Activated naive CD4-positive, alpha-beta T cell treated with anti-CD3 and anti-CD28 coated beads, Interleukin-2, amount 10 ng/mL, durations not matched to agents 7 days and 5 days (primary cell): ENCODE measurements at regions of chr21 and their contacts with region 1.

Region 1: GRCh38 chr21:42107881-42108553 is 36.9 kb downstream of the UMODL1 start:
- DNase-seq: peak; percentile 78
- H3K4me3 Mint-ChIP-seq: peak overlapping the region; percentile 33
- H3K27ac Mint-ChIP-seq: peak overlapping the region; percentile 80
- H3K4me1 Mint-ChIP-seq: peaks cover 14% of the 10 kb centered on the region
- H3K27me3 Mint-ChIP-seq: peaks cover 38% of the 10 kb centered on the region

Region 2: GRCh38 chr21:41612674-41613532 is 495.1 kb before region 1 on chr21:
- CTCF ChIA-PET with region 1: interaction called, 13 read pairs
- DNase-seq: peak; percentile 44
- H3K4me3 Mint-ChIP-seq: no peak overlapping the region
- H3K27ac Mint-ChIP-seq: no peak overlapping the region
- H3K4me1 Mint-ChIP-seq: no peaks in the 10 kb centered on the region
- H3K27me3 Mint-ChIP-seq: peaks cover 48% of the 10 kb centered on the region

Region 3: DNA sequence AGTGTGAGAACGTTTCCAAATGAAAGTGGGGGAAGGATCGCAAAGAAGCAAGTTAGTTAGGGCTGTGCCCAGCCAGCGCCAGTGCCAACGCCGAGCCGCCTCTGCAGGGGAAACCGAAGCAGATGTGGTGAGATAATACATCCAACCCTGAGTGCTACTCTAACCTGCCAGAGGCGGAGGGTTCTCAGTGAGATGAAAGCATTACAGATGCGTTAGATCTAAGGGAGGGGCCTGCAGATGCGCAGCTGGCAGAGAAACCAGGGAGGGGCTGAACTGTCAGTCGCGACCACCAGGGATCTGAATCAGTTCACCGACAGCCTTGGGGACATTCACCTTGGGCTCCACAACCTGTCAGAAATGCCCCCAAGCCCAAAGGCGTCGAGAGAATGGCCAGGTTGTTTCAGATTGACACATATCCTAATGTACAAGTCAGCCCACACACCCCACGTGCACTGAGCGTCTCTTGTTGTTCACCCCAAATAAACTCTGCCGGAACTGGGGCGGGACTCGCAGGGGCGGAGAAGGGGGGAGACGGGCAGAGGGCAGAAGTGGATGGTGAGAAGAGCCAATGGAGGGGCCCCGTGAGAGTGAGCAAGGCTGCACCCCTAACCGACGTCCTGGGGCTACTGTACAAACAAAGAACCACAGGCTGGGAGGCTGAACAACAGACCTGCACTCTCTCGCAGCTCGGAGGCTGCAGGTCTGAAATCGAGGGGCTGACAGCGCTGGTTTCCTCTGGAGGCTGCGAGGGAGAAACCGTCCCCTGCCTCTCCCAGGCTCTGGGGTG is 45.6 kb before region 1 on chr21:
- CTCF ChIA-PET with region 1: interaction called, 11 read pairs
- DNase-seq: peak; percentile 97
- H3K4me3 Mint-ChIP-seq: peak overlapping the region; percentile 88
- H3K27ac Mint-ChIP-seq: peak overlapping the region; percentile 100
- H3K4me1 Mint-ChIP-seq: peaks cover 56% of the 10 kb centered on the region
- H3K27me3 Mint-ChIP-seq: peaks cover 5% of the 10 kb centered on the region

Region 4: GRCh38 chr21:42093991-42094421 is 14.0 kb before region 1 on chr21:
- CTCF ChIA-PET with region 1: interaction called, 12 read pairs
- DNase-seq: no peak
- H3K4me3 Mint-ChIP-seq: no peak overlapping the region
- H3K27ac Mint-ChIP-seq: no peak overlapping the region
- H3K4me1 Mint-ChIP-seq: peaks cover 12% of the 10 kb centered on the region
- H3K27me3 Mint-ChIP-seq: peaks cover 41% of the 10 kb centered on the region